CD4-positive, alpha-beta memory T cell (primary cell): ENCODE measurements at regions of chr10 and their contacts with region 1.

Region 1: DNA sequence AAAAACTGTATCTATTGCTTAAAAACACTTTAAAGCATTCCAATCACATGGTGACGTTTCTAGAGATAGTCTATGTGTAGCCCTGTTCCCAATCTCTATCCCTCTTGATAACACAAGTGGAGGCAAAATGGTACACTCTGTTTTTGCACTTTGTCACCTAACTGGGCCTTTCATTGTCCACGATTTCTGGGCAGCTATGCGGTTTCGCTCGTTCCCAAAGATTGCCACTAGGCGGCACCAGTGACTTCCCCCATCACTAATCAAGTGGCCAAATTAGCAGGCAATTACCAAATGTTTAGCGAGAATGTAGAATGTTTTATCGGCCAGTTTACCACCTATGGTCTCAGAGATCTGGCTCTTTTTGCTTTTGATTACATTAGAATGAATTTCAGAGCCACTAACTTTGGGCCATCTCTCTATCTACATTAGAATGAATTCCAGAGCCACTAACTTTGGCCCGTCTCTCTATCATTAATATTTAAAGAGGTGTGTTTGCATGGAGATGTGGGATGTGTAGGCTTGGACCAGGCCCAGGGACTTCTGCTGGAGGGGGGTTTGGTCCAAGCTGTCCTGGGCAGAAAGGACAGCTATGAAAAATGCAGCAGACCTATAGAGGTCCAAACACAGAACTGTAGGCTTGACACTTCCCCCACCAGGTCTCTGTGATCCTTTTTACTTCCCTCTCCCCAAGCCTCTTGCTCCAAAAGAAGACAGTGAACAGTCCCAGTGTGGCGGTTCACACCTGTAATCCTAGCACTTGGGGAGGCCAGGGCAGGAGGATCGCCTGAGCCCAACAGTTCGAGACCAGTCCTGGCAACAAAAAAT is 90.1 kb downstream of the EPC1 start:
- DNase-seq: peak; percentile 62 to 67 (median 66)
- H3K4me3 ChIP-seq: no peak overlapping the region
- H3K4me3 Mint-ChIP-seq: peak overlapping the region in 3 of 8 donors; percentile 5 to 44 (median 20)
- H3K27ac ChIP-seq: no peak overlapping the region
- H3K27ac Mint-ChIP-seq: peak overlapping the region in 1 of 7 donors; percentile 46
- H3K4me1 ChIP-seq: peaks cover 7% of the 10 kb centered on the region
- H3K4me1 Mint-ChIP-seq: peaks cover 5 to 10% (median 7%) of the 10 kb centered on the region in 4 donors
- H3K27me3 ChIP-seq: no peaks in the 10 kb centered on the region
- H3K27me3 Mint-ChIP-seq: no peaks in the 10 kb centered on the region

Region 2: DNA sequence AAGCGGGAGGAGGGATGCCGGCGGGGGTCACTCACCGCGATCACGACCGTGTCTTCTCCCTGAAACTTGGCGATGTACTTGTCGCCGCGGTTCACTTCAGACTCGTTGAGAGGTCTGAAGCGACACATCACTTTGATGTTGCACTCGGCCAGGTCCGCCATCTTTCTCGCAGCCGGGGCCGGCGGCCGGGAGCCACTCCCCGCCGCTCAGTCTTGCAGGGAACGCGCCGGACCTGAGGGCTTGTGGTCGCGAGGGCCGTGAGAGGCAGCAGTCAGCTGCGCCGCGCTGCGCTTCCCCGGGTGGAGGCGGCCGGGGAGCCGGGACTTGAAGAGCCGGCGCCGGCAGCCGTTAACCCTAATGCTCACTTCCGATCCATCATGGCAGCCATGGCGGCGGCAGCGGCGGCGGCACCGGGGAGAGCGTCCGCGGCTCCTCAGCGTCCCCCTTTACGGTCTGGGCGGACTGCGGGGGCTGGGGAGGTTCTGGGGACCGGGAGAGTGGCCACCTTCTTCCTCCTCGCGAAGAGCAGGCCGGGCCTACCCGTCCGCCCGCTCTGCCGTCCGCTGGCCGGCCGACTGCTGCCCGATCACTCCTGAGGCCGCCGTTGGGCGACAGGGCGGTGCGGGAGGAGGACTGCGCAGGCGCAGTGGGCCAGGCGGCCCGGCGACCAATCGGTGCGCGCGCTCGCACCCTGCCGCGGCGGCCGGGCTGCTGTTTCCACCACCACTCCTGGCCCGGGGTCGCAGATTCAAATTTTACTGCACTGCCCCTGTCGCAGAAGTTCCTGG is 200.8 kb before region 1 on chr10 and contains the start of gene KIF5B:
- CTCF ChIA-PET with region 1: no interaction called
- POLR2A ChIA-PET with region 1: no interaction called
- intact Hi-C with region 1: no loop called
- DNase-seq: peak; percentile 81 to 92 (median 88)
- H3K4me3 ChIP-seq: peak within 1 kb of the TSS; percentile 88 to 93
- H3K4me3 Mint-ChIP-seq: peak within 1 kb of the TSS; percentile 95 to 99 (median 98)
- H3K27ac ChIP-seq: peak within 1 kb of the TSS; percentile 81
- H3K27ac Mint-ChIP-seq: peak within 1 kb of the TSS; percentile 94 to 97 (median 95)
- H3K4me1 ChIP-seq: peaks cover 49% of the 10 kb centered on the region
- H3K4me1 Mint-ChIP-seq: peaks cover 30 to 54% (median 44%) of the 10 kb centered on the region in 4 donors
- H3K27me3 ChIP-seq: no peaks in the 10 kb centered on the region
- H3K27me3 Mint-ChIP-seq: no peaks in the 10 kb centered on the region
- total RNA-seq, gene KIF5B: 54.8 to 55.6 TPM

Region 3: GRCh38 chr10:32190890-32191491 is 65.8 kb before region 1 on chr10:
- CTCF ChIA-PET with region 1: no interaction called
- POLR2A ChIA-PET with region 1: no interaction called
- intact Hi-C with region 1: loop called (anchors 5 kb)
- DNase-seq: peak in 4 of 5 donors; percentile 31 to 44 (median 40)
- H3K4me3 ChIP-seq: no peak overlapping the region
- H3K4me3 Mint-ChIP-seq: no peak overlapping the region
- H3K27ac ChIP-seq: no peak overlapping the region
- H3K27ac Mint-ChIP-seq: peak overlapping the region in 4 of 7 donors; percentile 5 to 59 (median 50)
- H3K4me1 ChIP-seq: no peaks in the 10 kb centered on the region
- H3K4me1 Mint-ChIP-seq: peaks cover 0 to 6% (median 3%) of the 10 kb centered on the region in 4 donors
- H3K27me3 ChIP-seq: no peaks in the 10 kb centered on the region
- H3K27me3 Mint-ChIP-seq: no peaks in the 10 kb centered on the region

Region 4: DNA sequence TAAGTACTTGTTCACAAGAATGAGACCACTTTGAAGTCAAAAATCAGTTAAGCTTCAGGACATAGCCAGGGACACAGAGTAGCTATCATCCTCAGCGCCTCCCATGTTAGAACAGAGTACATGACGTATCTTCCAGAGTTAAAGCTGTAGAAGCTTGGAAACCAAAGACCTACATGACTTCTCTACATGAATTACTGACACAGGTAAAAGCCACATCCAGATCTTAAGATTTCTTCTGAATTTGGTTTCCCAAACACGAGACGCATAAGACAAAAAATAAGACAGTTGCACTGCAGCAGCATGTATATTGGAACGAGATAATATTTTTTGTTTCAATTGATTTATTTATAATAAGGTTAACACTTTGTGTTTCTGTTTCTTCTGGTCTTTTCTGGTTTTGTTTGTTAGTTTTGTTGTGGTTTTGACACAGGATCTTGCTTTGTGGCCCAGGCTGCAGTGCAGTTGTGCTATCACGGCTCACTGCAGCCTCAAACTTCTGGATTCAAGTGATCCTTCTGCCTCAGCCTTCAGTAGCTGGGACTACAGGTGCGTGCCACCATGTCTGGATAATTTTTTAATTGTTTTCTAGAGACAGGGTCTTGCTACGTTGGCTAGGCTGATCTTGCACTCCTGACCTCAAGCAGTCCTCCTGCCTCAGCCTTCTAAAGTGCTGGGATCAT is 100.4 kb after region 1 on chr10:
- CTCF ChIA-PET with region 1: interaction called, 21 read pairs
- POLR2A ChIA-PET with region 1: interaction called, 3 read pairs
- intact Hi-C with region 1: no loop called
- DNase-seq: peak; percentile 52 to 71 (median 64)
- H3K4me3 ChIP-seq: no peak overlapping the region
- H3K4me3 Mint-ChIP-seq: peak overlapping the region; percentile 12 to 81 (median 72)
- H3K27ac ChIP-seq: peak overlapping the region; percentile 46
- H3K27ac Mint-ChIP-seq: peak overlapping the region; percentile 79 to 94 (median 88)
- H3K4me1 ChIP-seq: peaks cover 90% of the 10 kb centered on the region
- H3K4me1 Mint-ChIP-seq: peaks cover 57 to 89% (median 70%) of the 10 kb centered on the region in 4 donors
- H3K27me3 ChIP-seq: no peaks in the 10 kb centered on the region
- H3K27me3 Mint-ChIP-seq: no peaks in the 10 kb centered on the region

Region 5: DNA sequence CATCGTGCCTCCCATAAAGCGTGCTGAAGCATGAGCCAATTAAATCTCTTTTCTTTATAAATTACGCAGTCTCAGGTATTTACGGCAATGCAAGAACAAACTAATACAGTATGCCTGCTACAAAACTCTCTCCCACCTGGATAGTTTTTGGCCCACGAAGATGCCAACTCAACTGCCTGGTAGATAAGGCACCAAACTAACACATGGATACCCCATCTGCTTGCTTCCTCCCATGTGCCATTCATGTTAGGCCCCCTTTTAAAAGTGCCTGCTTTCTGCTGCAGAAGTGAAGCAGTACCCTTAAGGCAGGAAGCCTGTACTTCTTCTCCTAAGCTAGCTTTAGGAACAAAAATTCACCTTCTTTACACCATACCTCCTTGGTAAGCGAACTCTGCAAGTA is 105.7 kb after region 1 on chr10:
- CTCF ChIA-PET with region 1: interaction called, 109 read pairs
- POLR2A ChIA-PET with region 1: interaction called, 3 read pairs
- intact Hi-C with region 1: loop called (anchors 1 kb)
- DNase-seq: no peak
- H3K4me3 ChIP-seq: no peak overlapping the region
- H3K4me3 Mint-ChIP-seq: peak overlapping the region in 7 of 8 donors; percentile 24 to 71 (median 38)
- H3K27ac ChIP-seq: no peak overlapping the region
- H3K27ac Mint-ChIP-seq: peak overlapping the region; percentile 47 to 92 (median 65)
- H3K4me1 ChIP-seq: peaks cover 81% of the 10 kb centered on the region
- H3K4me1 Mint-ChIP-seq: peaks cover 54 to 83% (median 65%) of the 10 kb centered on the region in 4 donors
- H3K27me3 ChIP-seq: no peaks in the 10 kb centered on the region
- H3K27me3 Mint-ChIP-seq: no peaks in the 10 kb centered on the region

Region 6: GRCh38 chr10:32367793-32368453 is 111.1 kb after region 1 on chr10:
- CTCF ChIA-PET with region 1: interaction called, 109 read pairs
- POLR2A ChIA-PET with region 1: interaction called, 5 read pairs
- intact Hi-C with region 1: loop called (anchors 1 kb)
- DNase-seq: peak; percentile 72 to 77 (median 75)
- H3K4me3 ChIP-seq: no peak overlapping the region
- H3K4me3 Mint-ChIP-seq: peak overlapping the region in 7 of 8 donors; percentile 31 to 76 (median 70)
- H3K27ac ChIP-seq: peak overlapping the region; percentile 33
- H3K27ac Mint-ChIP-seq: peak overlapping the region; percentile 62 to 92 (median 84)
- H3K4me1 ChIP-seq: peaks cover 83% of the 10 kb centered on the region
- H3K4me1 Mint-ChIP-seq: peaks cover 47 to 84% (median 64%) of the 10 kb centered on the region in 4 donors
- H3K27me3 ChIP-seq: no peaks in the 10 kb centered on the region
- H3K27me3 Mint-ChIP-seq: no peaks in the 10 kb centered on the region

Region 7: DNA sequence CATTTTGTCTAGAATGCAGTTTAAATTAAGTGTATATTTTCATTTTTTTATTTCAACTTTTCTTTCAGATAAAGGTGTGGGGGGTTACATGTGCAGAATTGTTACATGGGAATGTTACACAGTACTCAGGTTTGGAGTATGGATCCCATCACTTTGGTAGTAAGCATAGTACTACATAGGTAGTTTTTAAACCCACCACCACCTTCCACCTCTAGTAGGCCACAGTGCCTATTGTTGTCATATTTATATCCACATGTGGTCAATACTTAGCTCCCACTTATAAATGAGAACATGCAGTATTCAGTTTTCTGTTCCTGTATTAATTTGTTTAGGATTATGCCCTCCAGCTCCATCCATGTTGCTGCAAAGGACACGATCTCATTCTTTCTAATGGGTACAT is 389.7 kb after region 1 on chr10:
- CTCF ChIA-PET with region 1: no interaction called
- POLR2A ChIA-PET with region 1: no interaction called
- intact Hi-C with region 1: no loop called
- DNase-seq: no peak
- H3K4me3 ChIP-seq: no peak overlapping the region
- H3K4me3 Mint-ChIP-seq: no peak overlapping the region
- H3K27ac ChIP-seq: no peak overlapping the region
- H3K27ac Mint-ChIP-seq: no peak overlapping the region
- H3K4me1 ChIP-seq: peaks cover 12% of the 10 kb centered on the region
- H3K4me1 Mint-ChIP-seq: peaks cover 8 to 20% (median 12%) of the 10 kb centered on the region in 4 donors
- H3K27me3 ChIP-seq: no peaks in the 10 kb centered on the region
- H3K27me3 Mint-ChIP-seq: no peaks in the 10 kb centered on the region